SK-N-SH (cell line): ENCODE measurements at regions of chr19 and their contacts with region 1.

Region 1: DNA sequence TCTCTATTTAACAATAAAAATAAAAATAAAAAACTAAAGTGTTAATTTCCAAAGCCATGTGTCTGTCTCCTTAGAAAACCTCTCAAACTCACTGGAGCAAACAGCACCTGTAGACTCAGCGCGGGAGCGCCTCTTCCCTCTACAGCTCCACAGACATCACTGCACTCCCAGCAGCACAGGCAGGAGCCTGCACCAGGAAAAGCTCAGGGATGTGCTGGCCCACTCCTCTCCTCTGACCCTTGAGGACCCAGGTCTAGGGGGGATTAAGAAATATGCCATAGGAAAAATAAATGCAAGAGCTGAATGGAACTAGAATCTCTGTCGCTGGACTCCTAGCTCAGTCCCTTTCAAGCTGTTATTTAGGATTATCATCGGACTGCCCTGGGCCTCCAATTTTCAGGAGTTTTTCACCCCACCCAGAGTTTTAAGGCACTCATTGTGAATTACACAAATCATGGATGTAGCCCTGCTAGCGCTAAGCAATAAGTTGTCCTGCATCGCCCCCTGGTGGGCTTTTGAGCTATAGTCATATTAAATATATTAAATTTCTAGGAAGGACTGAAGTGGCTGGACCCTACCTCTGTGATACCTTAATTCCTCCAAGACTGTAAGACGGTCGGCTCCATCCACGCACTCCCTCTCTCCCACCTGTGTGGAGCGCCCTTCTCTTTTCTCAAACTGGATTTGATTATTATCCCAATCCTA is 333.9 kb downstream of the UQCRFS1 start:
- DNase-seq: peak; percentile 62
- H3K4me3 ChIP-seq: no peak overlapping the region; a peak in 1 of 4 replicates
- H3K27ac ChIP-seq: no peak overlapping the region
- H3K4me1 ChIP-seq: no peaks in the 10 kb centered on the region
- H3K27me3 ChIP-seq: peaks cover 35% of the 10 kb centered on the region; the same call in 1 of the 2 replicates
- CTCF ChIP-seq: peak; percentile 79
- EP300 ChIP-seq: no peak
- RAD21 ChIP-seq: peak; percentile 85

Region 2: DNA sequence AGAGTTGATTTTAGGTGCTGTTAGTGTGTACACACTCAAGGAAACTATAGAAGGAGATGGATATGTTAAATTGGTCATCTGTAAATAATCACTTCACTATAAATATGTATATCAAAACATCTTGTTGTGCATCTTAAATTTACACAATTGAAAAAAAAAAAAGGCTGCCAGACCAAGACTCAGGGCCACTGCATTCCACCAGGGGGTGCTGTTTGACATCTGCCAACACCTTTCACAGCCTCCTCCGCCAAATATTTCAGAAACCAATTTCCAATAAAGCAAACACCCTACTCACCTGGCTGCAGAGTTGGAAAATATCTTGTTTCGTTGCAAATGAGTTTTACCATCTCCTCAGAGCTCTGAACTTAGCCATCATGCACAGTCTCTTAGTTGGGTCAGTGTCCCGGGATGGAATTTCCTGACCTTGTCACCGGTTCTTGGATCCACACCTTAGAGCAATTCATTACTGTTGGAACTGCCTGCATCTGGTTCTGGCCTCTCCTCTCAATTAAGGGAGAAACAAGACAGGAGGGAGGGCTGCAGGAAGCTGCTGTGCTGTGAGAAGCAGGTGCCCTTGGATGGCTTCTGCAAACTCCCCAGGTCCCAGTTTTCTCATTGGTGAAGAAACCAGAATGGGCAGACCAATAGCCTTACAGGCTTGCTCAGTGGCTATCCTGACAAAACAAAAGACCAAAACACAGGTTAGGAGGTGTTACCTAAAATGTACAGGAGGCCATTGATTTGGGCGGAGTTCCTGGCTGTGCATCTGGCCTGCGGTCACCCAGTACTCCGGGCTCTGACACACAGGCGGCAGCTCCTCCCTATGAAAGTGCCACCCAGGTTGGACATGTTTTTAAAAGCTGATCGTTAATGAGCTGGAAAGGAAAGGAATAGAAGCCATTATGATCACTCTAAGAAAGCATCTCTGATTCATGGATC is 412.6 kb before region 1 on chr19:
- CTCF ChIA-PET with region 1: interaction called, 25 read pairs
- POLR2A ChIA-PET with region 1: no interaction called
- DNase-seq: peak; percentile 57
- H3K4me3 ChIP-seq: no peak overlapping the region; a peak in 1 of 4 replicates
- H3K27ac ChIP-seq: no peak overlapping the region
- H3K4me1 ChIP-seq: no peaks in the 10 kb centered on the region; a peak in 1 of 4 replicates
- H3K27me3 ChIP-seq: no peaks in the 10 kb centered on the region
- CTCF ChIP-seq: peak; percentile 93
- EP300 ChIP-seq: no peak
- RAD21 ChIP-seq: peak; percentile 66

Region 3: DNA sequence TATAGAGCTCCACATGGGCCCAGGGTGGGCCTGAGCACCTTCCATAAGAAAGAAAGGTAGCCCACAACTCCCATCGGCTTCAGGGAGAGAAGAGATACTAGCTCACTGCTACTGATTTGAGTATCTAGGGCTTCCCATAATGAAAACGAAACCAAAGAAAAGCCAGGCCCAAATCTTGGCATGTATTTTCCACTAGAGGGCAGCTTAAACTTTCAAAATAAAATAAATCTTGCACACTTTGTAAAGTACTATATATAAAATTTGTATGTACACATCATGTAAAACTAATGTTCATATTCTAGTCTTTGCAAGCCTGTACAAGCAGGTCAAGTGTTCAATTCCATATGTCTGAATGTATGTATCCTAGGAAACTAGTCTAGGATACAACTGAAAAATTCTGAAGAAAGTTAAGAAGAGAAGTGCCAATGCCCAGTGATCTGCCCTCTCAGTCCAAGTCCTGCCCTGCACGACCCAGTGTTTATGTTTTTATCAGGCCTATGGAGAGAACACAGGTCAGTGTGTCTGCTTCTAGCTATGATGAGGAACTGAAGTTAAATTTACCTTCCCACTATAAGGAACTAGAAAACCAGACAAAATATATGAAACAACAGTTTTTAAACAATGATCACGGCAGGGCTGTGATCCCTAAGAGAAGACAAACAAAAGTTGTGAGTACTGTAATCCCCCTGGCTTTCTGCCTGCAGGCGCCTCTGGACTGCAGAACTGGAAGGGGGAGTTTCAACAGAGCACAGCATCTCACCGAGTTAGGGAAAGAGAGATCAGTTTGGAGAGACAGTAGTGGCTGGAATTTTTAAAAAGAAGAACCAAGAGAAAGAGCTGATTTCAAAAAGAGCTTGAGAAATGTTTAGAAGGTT is 141.8 kb before region 1 on chr19:
- CTCF ChIA-PET with region 1: interaction called, 15 read pairs
- POLR2A ChIA-PET with region 1: no interaction called
- DNase-seq: no peak
- H3K4me3 ChIP-seq: peak overlapping the region in 1 of 2 experiments; percentile 39; a peak in 1 of 4 replicates
- H3K27ac ChIP-seq: no peak overlapping the region
- H3K4me1 ChIP-seq: no peaks in the 10 kb centered on the region
- H3K27me3 ChIP-seq: no peaks in the 10 kb centered on the region
- CTCF ChIP-seq: peak; percentile 83
- EP300 ChIP-seq: no peak
- RAD21 ChIP-seq: peak; percentile 48

Region 4: DNA sequence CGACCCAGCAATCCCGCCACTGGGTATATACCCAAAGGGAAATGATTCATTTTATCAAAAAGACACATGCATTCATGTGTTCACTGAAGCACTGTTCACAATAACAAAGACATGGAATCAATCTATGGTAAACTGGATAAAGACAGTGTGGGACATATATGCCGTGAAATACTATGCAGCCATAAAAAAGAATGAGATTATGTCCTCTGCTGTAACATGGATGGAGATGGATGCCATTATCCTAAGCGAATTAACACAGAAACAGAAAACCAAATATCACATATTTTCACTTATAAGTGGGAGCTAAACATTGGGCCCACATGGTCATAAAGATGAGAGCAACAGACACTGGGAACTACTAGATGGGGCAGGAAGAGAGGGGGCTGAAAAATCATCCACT is 11.0 kb before region 1 on chr19:
- CTCF ChIA-PET with region 1: interaction called, 10 read pairs
- POLR2A ChIA-PET with region 1: no interaction called
- DNase-seq: no peak
- H3K4me3 ChIP-seq: no peak overlapping the region
- H3K27ac ChIP-seq: no peak overlapping the region
- H3K4me1 ChIP-seq: no peaks in the 10 kb centered on the region
- H3K27me3 ChIP-seq: peaks cover 62% of the 10 kb centered on the region
- CTCF ChIP-seq: no peak
- EP300 ChIP-seq: no peak
- RAD21 ChIP-seq: no peak